BJ (cell line): ENCODE measurements at regions of chr7 and their contacts with region 1.

Region 1: GRCh38 chr7:129271500-129272355 is 46.9 kb downstream of the AHCYL2 start:
- DNase-seq: no peak
- H3K4me3 ChIP-seq: no peak overlapping the region
- H3K27me3 ChIP-seq: no peaks in the 10 kb centered on the region
- CTCF ChIP-seq: peak; percentile 69

Region 2: DNA sequence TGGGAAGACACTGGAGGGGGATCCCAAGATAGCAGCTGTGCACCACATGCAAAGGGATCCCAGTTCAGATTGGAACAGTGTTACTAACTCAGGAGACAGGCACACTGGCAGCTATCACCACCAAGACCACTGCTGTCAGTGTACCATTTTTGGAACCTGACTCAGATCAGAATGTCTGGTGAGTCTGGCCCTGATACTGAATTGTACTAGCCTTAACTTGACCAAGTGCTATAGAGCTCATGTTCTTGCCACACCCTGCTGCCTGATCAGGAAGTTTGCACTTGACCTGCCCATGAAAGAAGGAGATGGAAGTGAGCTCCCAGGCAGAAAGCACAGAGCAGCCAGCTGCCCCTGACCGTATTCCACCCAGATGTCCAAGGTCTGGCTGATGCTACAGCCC is 905.4 kb before region 1 on chr7:
- CTCF ChIA-PET with region 1: no interaction called
- POLR2A ChIA-PET with region 1: no interaction called
- DNase-seq: no peak
- H3K4me3 ChIP-seq: no peak overlapping the region
- H3K27me3 ChIP-seq: peaks cover 24% of the 10 kb centered on the region
- CTCF ChIP-seq: no peak

Region 3: GRCh38 chr7:129037585-129037984 is 234.1 kb before region 1 on chr7:
- CTCF ChIA-PET with region 1: no interaction called
- POLR2A ChIA-PET with region 1: no interaction called
- DNase-seq: no peak
- H3K4me3 ChIP-seq: no peak overlapping the region
- H3K27me3 ChIP-seq: no peaks in the 10 kb centered on the region
- CTCF ChIP-seq: no peak

Region 4: GRCh38 chr7:129252128-129252527 is 19.6 kb before region 1 on chr7:
- CTCF ChIA-PET with region 1: interaction called, 18 read pairs
- POLR2A ChIA-PET with region 1: interaction called, 3 read pairs
- DNase-seq: no peak
- H3K4me3 ChIP-seq: no peak overlapping the region
- H3K27me3 ChIP-seq: no peaks in the 10 kb centered on the region
- CTCF ChIP-seq: no peak

Region 5: GRCh38 chr7:129285111-129285510 is 13.4 kb after region 1 on chr7:
- CTCF ChIA-PET with region 1: interaction called, 11 read pairs
- POLR2A ChIA-PET with region 1: no interaction called
- DNase-seq: no peak
- H3K4me3 ChIP-seq: no peak overlapping the region
- H3K27me3 ChIP-seq: no peaks in the 10 kb centered on the region
- CTCF ChIP-seq: no peak

Region 6: GRCh38 chr7:129298268-129298893 is 26.7 kb after region 1 on chr7:
- CTCF ChIA-PET with region 1: interaction called, 13 read pairs
- POLR2A ChIA-PET with region 1: no interaction called
- DNase-seq: peak; percentile 3
- H3K4me3 ChIP-seq: no peak overlapping the region
- H3K27me3 ChIP-seq: no peaks in the 10 kb centered on the region
- CTCF ChIP-seq: peak; percentile 73

Region 7: DNA sequence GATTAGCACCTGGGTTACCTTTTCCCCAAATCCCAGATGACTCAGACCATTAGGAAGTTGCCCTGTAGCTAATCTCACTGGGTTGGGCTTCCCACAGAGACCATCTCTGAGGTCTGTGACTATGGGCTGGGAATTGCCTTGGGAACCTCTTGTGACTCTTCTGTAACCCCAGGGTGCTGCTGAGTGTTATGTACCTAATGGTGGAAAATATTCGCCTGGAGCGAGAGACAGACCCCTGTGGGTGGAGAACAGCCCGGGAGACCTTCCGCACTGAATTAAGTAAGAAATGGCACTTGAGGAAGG is 182.5 kb after region 1 on chr7:
- CTCF ChIA-PET with region 1: no interaction called
- POLR2A ChIA-PET with region 1: no interaction called
- DNase-seq: no peak
- H3K4me3 ChIP-seq: no peak overlapping the region
- H3K27me3 ChIP-seq: no peaks in the 10 kb centered on the region
- CTCF ChIP-seq: no peak